Activated T-helper 1 cell treated with anti-CD3 and anti-CD28 coated beads, Interleukin-12 subunit alpha, Interleukin-12 subunit beta, Interleukin-2, Interleukin-4 antibody, amounts not matched to agents 30 ng/mL and 10 ng/mL and 1 ng/mL, durations not matched to agents 14 hours and 24 hours and 36 hours (primary cell): ENCODE measurements at regions of chr11 and their contacts with region 1.

Region 1: DNA sequence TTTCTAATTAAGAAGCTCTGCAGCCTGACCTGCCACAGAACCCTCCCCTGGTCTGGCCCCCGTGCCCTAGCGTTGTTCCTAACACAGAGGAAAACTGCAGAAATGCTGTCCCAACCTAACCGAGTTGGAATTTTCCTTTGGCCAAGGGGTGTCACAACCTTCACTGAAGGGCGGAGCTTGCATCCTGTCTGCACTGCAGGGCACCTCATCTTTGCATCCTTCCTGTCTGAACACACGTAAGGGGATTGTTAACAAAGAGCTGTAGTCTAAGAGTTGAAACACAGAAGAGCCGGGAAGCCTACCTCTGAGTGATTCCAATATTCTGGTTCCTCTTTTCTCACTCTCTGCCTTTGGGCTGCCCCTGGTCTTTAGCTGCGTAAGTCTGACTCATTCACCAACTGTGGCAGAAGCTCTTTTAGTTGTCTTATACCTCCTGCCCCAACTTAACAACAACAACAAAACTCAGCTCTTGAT is 1.6 kb downstream of the DIXDC1 start:
- DNase-seq: peak; percentile 22
- H3K4me3 Mint-ChIP-seq: peak overlapping the region; percentile 88
- H3K27ac Mint-ChIP-seq: peak overlapping the region; percentile 92
- H3K4me1 Mint-ChIP-seq: peaks cover 58% of the 10 kb centered on the region
- H3K27me3 Mint-ChIP-seq: no peaks in the 10 kb centered on the region

Region 2: GRCh38 chr11:111479666-111480065 is 459.1 kb before region 1 on chr11:
- intact Hi-C with region 1: no loop called
- DNase-seq: no peak
- H3K4me3 Mint-ChIP-seq: no peak overlapping the region
- H3K27ac Mint-ChIP-seq: no peak overlapping the region
- H3K4me1 Mint-ChIP-seq: peaks cover 6% of the 10 kb centered on the region
- H3K27me3 Mint-ChIP-seq: peaks cover 25% of the 10 kb centered on the region

Region 3: DNA sequence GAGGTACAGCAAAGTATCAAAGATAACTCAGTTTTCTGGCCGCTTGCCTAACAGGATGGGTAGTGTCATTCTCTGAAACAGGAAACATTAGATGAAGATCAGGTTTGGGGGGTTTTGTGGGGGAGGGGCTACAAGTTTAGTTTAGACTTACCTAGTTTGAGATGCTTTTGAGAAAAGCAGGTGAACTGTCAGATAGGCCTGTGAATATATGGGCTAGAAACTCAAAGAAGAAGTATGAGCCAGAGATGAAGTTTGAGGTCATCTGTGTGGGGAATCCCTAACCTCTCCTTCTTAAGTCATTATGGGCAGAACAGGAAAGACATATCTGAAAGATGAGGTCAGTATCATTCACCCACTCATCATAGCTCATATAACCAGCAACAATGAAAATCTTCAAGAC is 412.2 kb before region 1 on chr11:
- intact Hi-C with region 1: loop called (anchors 5 kb)
- DNase-seq: no peak
- H3K4me3 Mint-ChIP-seq: no peak overlapping the region
- H3K27ac Mint-ChIP-seq: peak overlapping the region; percentile 24
- H3K4me1 Mint-ChIP-seq: peaks cover 43% of the 10 kb centered on the region
- H3K27me3 Mint-ChIP-seq: no peaks in the 10 kb centered on the region

Region 4: GRCh38 chr11:111963931-111964340 is 25.2 kb after region 1 on chr11:
- intact Hi-C with region 1: loop called (anchors 2 kb)
- DNase-seq: no peak
- H3K4me3 Mint-ChIP-seq: no peak overlapping the region
- H3K27ac Mint-ChIP-seq: no peak overlapping the region
- H3K4me1 Mint-ChIP-seq: no peaks in the 10 kb centered on the region
- H3K27me3 Mint-ChIP-seq: no peaks in the 10 kb centered on the region

Region 5: GRCh38 chr11:112004389-112004788 is 65.7 kb after region 1 on chr11:
- intact Hi-C with region 1: no loop called
- DNase-seq: no peak
- H3K4me3 Mint-ChIP-seq: no peak overlapping the region
- H3K27ac Mint-ChIP-seq: no peak overlapping the region
- H3K4me1 Mint-ChIP-seq: no peaks in the 10 kb centered on the region
- H3K27me3 Mint-ChIP-seq: peaks cover 3% of the 10 kb centered on the region